Dorsolateral prefrontal cortex (tissue), 120 donors: ENCODE measurements at regions of chr22 and their contacts with region 1.

Region 1: GRCh38 chr22:45994491-45995404 is 17.8 kb upstream of the WNT7B start:
- DNase-seq: peak in 9 of 10 donors; percentile 79 to 90 (median 86)
- H3K4me3 ChIP-seq: no peak overlapping the region
- H3K27ac ChIP-seq: peak overlapping the region in 3 of 59 donors; percentile 12 to 39 (median 36)
- H3K27me3 ChIP-seq: no peaks in the 10 kb centered on the region
- CTCF ChIP-seq: peak; percentile 86 to 99 (median 98)

Region 2: GRCh38 chr22:45775569-45776312 is 219.0 kb before region 1 on chr22:
- intact Hi-C with region 1: no loop called
- DNase-seq: no peak
- H3K4me3 ChIP-seq: no peak overlapping the region
- H3K27ac ChIP-seq: no peak overlapping the region
- H3K27me3 ChIP-seq: no peaks in the 10 kb centered on the region
- CTCF ChIP-seq: no peak

Region 3: DNA sequence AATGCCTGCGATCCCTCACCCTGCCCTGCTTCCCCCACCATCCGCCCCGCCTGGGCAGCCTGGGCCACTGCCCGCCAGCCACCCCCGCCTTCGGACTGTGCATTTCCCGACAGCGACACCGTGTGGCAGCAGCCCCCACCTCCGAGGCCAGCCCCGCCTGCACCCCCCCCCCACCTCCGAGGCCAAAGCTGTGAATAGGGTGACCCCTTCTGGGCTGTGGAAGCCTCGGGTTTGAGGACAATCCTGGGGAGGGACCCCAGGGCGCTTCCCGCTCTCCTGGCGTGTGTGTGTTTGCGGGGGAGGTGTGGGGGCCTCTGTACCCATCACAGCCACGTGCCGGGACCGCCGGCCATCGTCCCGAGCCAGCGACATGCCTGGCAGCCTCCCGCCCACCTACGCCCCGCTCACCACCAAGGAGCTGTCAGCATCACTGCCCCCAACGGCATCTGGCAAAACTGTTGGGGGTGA is 121.8 kb after region 1 on chr22:
- intact Hi-C with region 1: loop called in 1 of 2 experiments (anchors 2 kb)
- DNase-seq: peak; percentile 90 to 94 (median 92)
- H3K4me3 ChIP-seq: peak overlapping the region in 13 of 59 donors; percentile 5 to 41 (median 19)
- H3K27ac ChIP-seq: peak overlapping the region in 58 of 59 donors; percentile 4 to 98 (median 87)
- H3K27me3 ChIP-seq: no peaks in the 10 kb centered on the region
- CTCF ChIP-seq: peak in 55 of 56 donors; percentile 52 to 95 (median 81)

Region 4: GRCh38 chr22:46303347-46303965 is 308.7 kb after region 1 on chr22:
- intact Hi-C with region 1: loop called (anchors 5 kb)
- DNase-seq: no peak
- H3K4me3 ChIP-seq: no peak overlapping the region
- H3K27ac ChIP-seq: no peak overlapping the region
- H3K27me3 ChIP-seq: no peaks in the 10 kb centered on the region
- CTCF ChIP-seq: no peak

Region 5: GRCh38 chr22:46309526-46310085 is 314.9 kb after region 1 on chr22:
- intact Hi-C with region 1: loop called (anchors 5 kb)
- DNase-seq: no peak
- H3K4me3 ChIP-seq: no peak overlapping the region
- H3K27ac ChIP-seq: no peak overlapping the region
- H3K27me3 ChIP-seq: no peaks in the 10 kb centered on the region
- CTCF ChIP-seq: no peak

Region 6: DNA sequence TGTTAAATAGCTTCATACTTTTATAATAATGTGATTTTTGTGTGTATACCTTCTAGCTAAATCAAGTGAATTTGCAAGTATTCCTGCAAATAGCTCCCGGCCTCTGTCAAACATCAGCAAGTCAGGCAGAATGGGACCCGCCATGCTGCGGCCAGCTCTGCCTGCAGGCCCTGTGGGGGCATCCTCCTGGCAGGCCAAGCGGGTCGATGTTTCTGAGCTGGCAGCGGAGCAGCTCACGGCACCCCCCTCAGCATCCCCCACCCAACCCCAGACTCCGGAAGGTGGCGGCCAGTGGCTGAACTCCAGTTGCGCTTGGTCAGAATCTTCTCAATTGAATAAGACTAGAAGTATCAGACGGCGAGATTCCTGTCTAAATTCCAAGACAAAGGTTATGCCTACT is 321.2 kb after region 1 on chr22:
- intact Hi-C with region 1: loop called (anchors 5 kb)
- DNase-seq: no peak
- H3K4me3 ChIP-seq: no peak overlapping the region
- H3K27ac ChIP-seq: no peak overlapping the region
- H3K27me3 ChIP-seq: no peaks in the 10 kb centered on the region
- CTCF ChIP-seq: no peak

Region 7: GRCh38 chr22:46542011-46542985 is 547.5 kb after region 1 on chr22:
- intact Hi-C with region 1: loop called in 1 of 2 experiments (anchors 5 kb)
- DNase-seq: peak; percentile 53 to 87 (median 71)
- H3K4me3 ChIP-seq: no peak overlapping the region
- H3K27ac ChIP-seq: no peak overlapping the region
- H3K27me3 ChIP-seq: peaks cover 0 to 31% (median 20%) of the 10 kb centered on the region in 45 donors
- CTCF ChIP-seq: peak; percentile 63 to 97 (median 84)